ENCODE measurements at regions of chr3 and their contacts with region 1.

Region 1: DNA sequence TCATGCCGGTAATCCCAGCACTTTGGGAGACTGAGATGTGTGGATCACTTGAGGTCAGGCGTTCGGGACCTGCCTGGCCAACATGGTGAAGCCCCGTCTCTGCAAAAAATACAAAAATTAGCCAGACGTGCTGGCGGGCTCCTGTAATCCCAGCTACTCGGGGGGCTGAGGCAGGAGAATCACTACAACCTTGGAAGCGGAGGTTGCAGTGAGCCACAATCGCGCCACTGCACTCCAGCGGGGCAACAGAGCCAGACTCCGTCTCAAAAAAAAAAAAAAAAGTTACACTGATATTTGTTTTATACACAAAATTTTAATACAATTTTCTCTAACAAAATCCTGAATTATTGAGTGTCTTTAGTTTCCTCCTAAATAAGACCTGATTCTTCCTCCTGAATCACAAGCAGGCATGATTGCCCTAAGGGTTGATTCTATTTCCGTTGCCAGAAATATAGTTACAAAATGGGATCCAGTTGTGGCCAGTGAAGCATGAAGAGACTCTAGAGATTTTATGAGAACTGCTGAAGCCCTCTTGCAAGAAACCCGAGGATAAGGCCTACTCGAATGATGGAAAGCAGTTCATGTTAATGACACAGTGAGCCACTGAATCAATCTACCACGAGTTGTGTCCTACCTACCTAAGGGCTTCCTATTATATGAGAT is 9.6 kb upstream of the SMARCC1 start:
- DNase-seq: no peak
- ATAC-seq: no peak
- H3K4me3 ChIP-seq: no peak overlapping the region
- H3K27ac ChIP-seq: no peak overlapping the region
- H3K4me1 ChIP-seq: no peaks in the 10 kb centered on the region
- H3K27me3 ChIP-seq: no peaks in the 10 kb centered on the region

Region 2: GRCh38 chr3:47515864-47516319 is 275.4 kb before region 1 on chr3:
- intact Hi-C with region 1: loop called in 2 of 4 experiments (anchors 5 kb)
- DNase-seq: no peak
- ATAC-seq: no peak
- H3K4me3 ChIP-seq: no peak overlapping the region
- H3K27ac ChIP-seq: no peak overlapping the region
- H3K4me1 ChIP-seq: no peaks in the 10 kb centered on the region
- H3K27me3 ChIP-seq: no peaks in the 10 kb centered on the region

Region 3: GRCh38 chr3:47522082-47522987 is 269.0 kb before region 1 on chr3:
- intact Hi-C with region 1: loop called (anchors 1 to 5 kb)
- DNase-seq: peak; percentile 73 to 92 (median 90)
- ATAC-seq: peak; percentile 92 to 96
- H3K4me3 ChIP-seq: no peak overlapping the region
- H3K27ac ChIP-seq: no peak overlapping the region
- H3K4me1 ChIP-seq: no peaks in the 10 kb centered on the region
- H3K27me3 ChIP-seq: no peaks in the 10 kb centered on the region

Region 4: GRCh38 chr3:47747558-47747957 is 43.8 kb before region 1 on chr3:
- intact Hi-C with region 1: no loop called
- DNase-seq: no peak
- ATAC-seq: no peak
- H3K4me3 ChIP-seq: no peak overlapping the region
- H3K27ac ChIP-seq: no peak overlapping the region
- H3K4me1 ChIP-seq: no peaks in the 10 kb centered on the region
- H3K27me3 ChIP-seq: no peaks in the 10 kb centered on the region